ENCODE measurements at regions of chr9 and their contacts with region 1.

Region 1: DNA sequence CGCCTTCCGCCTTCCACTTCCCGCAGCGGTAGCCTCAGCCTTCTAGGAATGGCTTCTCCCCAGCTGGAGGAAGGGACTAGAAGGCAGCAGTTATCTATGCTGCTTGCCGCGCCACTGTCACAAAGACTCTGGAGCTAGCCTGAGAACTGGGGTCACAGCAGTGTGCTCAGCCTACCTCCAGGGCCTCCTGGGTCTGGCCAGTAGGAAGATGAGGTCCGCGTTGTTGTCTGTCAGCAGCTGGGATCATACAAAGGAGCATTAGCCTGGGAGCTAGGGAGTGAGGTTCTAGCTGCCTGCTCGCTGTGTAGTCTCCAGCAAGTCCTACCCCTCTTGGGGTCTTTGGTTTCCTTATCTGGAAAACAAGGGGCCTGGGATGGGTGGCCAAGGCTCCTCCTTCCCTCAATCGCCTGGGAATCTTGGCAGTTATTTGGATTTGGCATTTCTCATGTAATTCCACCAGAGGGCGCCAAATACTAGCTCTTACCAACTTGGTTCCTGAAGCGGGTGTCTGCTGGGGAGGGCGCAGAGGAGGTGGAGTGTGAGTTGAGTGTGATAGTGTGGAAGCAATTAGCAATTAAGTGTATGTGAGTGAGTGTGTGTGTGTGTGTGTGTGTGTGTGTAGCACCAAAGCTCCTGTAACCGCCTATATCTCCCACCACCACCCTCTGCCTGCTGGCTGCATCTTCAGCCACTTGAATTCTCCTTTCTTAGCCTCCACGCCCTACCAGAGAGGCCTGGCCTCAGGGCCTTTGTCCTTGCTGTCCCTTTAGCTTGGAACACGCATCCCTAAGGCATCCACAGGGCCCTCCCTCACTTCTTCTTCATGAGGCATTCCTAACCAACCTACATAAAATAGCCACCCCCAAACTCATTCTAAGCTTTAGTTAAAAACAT is 97.1 kb downstream of the ENTREP1 start:
- DNase-seq: no peak
- H3K4me3 ChIP-seq: no peak overlapping the region
- CTCF ChIP-seq: peak; percentile 69

Region 2: DNA sequence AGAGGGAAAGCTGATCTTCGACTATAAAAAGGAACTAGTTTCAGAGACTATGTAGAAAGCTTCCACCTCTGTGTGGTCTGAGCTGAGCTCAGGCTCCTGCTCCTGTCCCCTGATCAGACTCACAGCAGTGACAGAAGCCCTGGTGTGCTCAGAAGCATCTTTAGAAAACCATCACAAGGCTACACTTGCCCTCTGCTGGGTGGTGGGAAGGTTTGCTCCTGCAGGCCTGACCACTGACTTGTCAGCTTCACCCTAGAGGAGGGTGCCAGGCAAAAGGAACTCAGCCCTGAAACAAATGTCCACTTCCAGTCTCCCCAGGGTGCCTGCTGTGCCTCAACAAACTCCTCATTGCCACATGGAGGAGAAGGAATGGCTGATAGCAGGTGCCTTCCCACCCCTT is 19.7 kb after region 1 on chr9:
- CTCF ChIA-PET with region 1: interaction called, 12 read pairs
- POLR2A ChIA-PET with region 1: no interaction called
- DNase-seq: no peak
- H3K4me3 ChIP-seq: no peak overlapping the region
- CTCF ChIP-seq: no peak

Region 3: GRCh38 chr9:69532396-69532795 is 110.2 kb after region 1 on chr9:
- CTCF ChIA-PET with region 1: interaction called, 31 read pairs
- POLR2A ChIA-PET with region 1: no interaction called
- DNase-seq: no peak
- H3K4me3 ChIP-seq: no peak overlapping the region
- CTCF ChIP-seq: no peak

Region 4: DNA sequence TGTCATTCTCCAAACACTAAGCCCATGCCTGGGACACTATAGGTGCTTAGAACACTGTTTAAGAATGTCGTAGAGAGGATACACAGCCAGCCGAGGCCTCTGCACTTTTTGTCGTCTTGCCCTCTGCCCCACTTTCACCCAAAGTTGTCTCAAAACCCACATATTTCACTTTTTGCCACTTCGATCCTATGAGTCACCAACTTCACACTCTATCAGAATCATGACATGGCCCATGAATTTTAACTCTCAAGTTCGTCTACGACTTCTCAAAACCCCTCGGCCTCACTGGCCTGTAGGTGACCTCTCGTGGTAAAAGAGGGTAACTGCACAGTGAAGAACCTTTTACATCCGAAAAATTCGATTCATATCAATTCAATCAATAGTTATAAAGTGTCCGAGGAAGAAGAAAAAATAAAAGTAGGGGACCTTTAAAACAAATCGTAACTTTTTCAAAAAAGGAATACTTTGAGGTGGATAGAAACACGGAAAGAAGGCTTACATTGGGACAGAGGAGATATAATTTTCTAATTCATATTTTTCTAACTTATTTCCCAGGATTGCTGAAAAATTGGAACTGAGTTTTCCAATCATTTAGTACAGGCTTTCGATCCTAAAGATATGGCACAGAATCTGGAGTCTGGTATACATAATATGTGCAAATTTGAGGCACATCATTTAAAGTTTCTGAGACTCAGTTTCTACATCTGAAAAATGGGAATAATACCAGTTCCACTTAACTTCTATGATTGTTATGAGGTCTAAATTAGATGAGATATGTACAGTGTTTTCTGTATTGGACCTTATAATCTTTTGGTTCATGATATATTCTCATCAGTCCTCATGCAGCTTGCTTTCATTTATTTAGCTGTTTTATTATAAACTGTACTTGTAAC is 127.4 kb after region 1 on chr9:
- CTCF ChIA-PET with region 1: interaction called, 197 read pairs
- POLR2A ChIA-PET with region 1: no interaction called
- DNase-seq: no peak
- H3K4me3 ChIP-seq: no peak overlapping the region
- CTCF ChIP-seq: peak; percentile 70

Region 5: DNA sequence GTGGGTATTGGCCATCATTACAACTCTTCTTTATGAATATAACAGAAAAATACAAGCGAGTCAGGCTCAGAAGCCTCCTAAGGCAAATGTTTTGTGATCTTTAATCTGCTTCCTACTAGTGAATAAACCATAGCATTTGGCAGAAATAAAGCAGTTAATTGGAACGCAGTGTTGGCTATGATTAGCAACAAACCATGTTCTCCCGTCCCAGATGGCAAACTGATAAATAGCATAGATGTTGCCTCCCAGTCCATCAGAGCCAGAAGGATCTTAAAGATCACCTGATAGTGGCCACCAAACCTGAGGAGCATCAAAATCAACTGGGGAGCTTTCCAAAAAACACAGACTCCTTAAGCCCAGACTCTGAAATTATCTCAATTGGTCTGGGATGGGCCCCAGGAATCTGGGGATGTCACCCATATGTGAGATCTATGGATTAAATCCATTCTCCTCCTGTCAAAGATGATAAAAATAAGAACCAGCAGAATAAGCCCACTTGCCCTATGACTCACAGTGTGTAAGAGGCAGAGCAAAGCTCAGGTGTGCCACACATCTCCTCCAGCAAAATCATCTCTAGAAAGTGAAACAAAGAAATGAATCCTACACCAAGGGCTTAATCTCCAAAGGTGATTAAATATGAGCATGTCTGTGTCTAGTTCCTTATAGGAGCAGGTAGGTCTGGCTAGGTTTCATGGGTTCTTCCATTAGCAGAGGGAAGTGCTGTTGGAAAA is 199.7 kb after region 1 on chr9:
- CTCF ChIA-PET with region 1: no interaction called
- POLR2A ChIA-PET with region 1: no interaction called
- DNase-seq: no peak
- H3K4me3 ChIP-seq: no peak overlapping the region
- CTCF ChIP-seq: no peak

Region 6: DNA sequence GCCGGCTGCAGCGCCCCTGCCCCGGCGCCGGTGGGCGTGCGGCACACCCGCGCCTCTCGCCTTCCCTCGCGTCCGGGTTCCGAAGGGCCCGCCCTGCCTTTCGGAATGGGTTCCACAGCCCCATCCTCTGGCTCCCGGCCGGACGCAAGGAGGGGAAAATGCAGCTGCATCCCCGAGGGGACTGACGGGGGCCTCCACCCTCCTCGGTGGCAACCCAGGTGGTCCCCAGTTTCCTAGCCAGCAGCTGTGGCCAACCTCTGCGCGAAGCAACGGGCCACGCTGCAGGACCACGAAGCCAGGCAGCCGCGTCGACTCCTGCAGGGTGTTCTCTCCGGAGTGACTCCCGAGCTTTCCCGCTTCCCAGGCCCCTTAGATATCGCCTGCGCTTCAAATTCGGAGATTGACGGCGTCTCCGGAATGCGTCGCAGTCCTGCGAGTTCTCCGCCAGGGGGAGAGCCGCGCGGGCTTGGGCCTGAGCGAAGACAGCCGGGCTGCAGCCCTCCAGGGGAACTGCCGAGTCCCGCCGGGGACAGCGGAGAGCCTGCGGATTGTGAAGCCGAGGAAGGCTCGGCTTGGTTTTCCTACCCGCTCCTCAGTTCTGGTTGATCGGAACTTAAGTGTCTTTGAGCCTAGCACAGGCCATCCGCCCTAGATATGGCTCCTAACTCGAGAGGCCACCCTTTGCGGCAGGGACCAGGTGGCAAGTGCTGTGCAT is 250.6 kb after region 1 on chr9:
- CTCF ChIA-PET with region 1: interaction called, 40 read pairs
- POLR2A ChIA-PET with region 1: no interaction called
- DNase-seq: peak; percentile 33
- H3K4me3 ChIP-seq: peak overlapping the region; percentile 82
- CTCF ChIP-seq: peak; percentile 99

Region 7: GRCh38 chr9:69919461-69920061 is 497.4 kb after region 1 on chr9:
- CTCF ChIA-PET with region 1: interaction called, 51 read pairs
- POLR2A ChIA-PET with region 1: no interaction called
- DNase-seq: no peak
- H3K4me3 ChIP-seq: no peak overlapping the region
- CTCF ChIP-seq: peak; percentile 54

Region 8: GRCh38 chr9:70229579-70229978 is 807.4 kb after region 1 on chr9:
- CTCF ChIA-PET with region 1: interaction called, 17 read pairs
- POLR2A ChIA-PET with region 1: no interaction called
- DNase-seq: no peak
- H3K4me3 ChIP-seq: no peak overlapping the region
- CTCF ChIP-seq: peak; percentile 35

Measured in AG04449 (cell line).